Lower leg skin (tissue), 4 donors: ENCODE measurements at regions of chr1 and their contacts with region 1.

Region 1: DNA sequence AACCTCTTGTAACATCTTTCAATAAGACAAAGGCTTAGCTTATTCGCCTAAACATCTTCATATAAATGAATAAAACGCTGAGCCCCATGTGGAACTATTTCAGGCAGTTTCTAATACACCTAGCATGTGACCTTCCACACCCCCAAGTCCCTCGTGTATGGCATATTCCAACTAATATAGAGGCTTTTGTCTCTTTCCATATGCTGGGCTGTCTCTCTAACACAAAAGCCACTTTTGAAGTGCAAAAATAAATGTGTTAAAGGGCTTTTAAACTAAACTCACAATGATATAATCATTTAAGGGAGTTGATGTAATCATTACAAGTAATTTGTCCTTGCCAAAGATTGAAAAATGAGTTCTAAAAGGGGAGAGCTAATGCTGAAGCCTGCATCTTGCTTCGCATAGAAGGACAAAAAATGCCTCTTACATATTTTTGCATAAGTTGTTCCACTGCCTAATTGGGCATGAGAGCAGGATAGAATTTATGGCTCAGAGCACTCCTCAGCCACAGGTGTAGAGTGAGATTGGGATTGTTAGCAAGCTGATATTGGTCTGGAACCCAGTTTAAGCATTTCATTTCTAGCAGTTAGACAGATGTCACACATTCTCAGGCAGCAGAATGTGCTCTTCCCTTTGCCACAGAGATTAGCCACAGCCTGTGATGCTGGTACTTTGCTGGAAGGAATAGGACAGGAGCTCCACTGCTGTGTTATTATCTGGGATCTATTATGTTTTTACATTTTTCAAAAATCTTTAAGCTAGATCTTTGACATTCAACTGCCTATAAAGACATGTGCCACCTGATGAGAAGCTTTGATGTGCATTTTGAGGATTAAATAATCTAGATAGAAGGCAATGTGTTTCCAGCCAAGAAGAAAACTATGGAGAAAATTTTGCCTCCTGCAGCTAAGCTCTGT is 1044.4 kb downstream of the ADGRL2 start:
- DNase-seq: no peak
- H3K4me3 ChIP-seq: no peak overlapping the region
- CTCF ChIP-seq: no peak
- POLR2A ChIP-seq: no peak

Region 2: GRCh38 chr1:81387446-81387845 is 1457.7 kb before region 1 on chr1:
- intact Hi-C with region 1: loop called (anchors 5 kb)
- DNase-seq: no peak
- H3K4me3 ChIP-seq: no peak overlapping the region
- CTCF ChIP-seq: no peak
- POLR2A ChIP-seq: no peak